ENCODE measurements at regions of chr12 and their contacts with region 1.

Region 1: GRCh38 chr12:6752921-6753771 is at the start of gene MLF2:
- DNase-seq: peak; percentile 98 to 99
- ATAC-seq: peak; percentile 93 to 94
- H3K4me3 ChIP-seq: peak within 1 kb of the TSS; percentile 98
- H3K27ac ChIP-seq: peak within 1 kb of the TSS; percentile 97 to 98
- H3K4me1 ChIP-seq: peaks cover 21% of the 10 kb centered on the region
- CTCF ChIP-seq: no peak; the same call in 2 of the 3 replicates
- EP300 ChIP-seq: no peak
- POLR2A ChIP-seq: peak; percentile 94
- RAD21 ChIP-seq: no peak; a peak in 2 of 5 replicates
- polyA plus RNA-seq, gene MLF2: 302 and 310 TPM in 2 replicates

Region 2: DNA sequence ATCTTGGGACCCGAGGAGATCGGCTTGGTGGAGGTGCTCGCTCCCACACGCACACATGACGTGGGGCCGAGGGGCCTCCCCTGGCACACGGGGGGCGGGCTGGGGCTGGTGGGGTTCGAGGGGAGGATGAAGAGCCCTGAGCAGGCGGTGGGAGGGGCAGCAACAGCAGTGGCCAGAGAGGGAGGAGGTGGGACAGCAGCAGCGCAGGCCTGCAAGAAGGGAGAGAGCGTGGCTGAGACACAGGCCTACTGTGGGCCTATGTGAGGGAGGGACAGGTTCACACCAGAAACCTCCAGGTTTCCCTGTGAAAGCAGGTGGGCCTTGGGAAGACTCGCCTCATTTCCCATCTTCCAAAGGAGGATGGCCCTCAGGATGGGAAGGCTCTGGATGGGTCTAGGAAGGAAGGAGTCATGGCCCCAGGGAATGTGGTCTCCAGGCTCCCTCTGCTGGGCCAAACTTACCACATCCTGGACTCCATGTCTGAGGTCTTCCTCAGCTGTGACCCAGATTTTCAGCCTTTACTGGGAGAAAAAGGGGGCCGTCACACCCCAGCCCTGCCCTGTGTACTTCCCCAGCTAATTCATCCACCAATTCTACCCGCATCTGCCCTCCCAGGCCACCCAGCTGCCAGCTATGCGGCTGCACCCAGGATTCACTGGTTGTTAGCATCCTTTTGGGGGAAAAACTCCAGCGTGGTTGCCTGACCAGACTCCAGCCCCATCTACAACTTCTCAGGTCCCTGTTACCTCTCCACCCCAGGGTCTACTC is 55.4 kb before region 1 on chr12:
- CTCF ChIA-PET with region 1: interaction called, 12 read pairs
- POLR2A ChIA-PET with region 1: no interaction called
- DNase-seq: peak; percentile 76 to 82
- ATAC-seq: peak; percentile 77 to 93
- H3K4me3 ChIP-seq: no peak overlapping the region
- H3K27ac ChIP-seq: no peak overlapping the region
- H3K4me1 ChIP-seq: peaks cover 7% of the 10 kb centered on the region; the same call in 1 of the 3 replicates
- CTCF ChIP-seq: peak; percentile 64
- EP300 ChIP-seq: no peak
- POLR2A ChIP-seq: no peak
- RAD21 ChIP-seq: peak; percentile 76 to 91

Region 3: DNA sequence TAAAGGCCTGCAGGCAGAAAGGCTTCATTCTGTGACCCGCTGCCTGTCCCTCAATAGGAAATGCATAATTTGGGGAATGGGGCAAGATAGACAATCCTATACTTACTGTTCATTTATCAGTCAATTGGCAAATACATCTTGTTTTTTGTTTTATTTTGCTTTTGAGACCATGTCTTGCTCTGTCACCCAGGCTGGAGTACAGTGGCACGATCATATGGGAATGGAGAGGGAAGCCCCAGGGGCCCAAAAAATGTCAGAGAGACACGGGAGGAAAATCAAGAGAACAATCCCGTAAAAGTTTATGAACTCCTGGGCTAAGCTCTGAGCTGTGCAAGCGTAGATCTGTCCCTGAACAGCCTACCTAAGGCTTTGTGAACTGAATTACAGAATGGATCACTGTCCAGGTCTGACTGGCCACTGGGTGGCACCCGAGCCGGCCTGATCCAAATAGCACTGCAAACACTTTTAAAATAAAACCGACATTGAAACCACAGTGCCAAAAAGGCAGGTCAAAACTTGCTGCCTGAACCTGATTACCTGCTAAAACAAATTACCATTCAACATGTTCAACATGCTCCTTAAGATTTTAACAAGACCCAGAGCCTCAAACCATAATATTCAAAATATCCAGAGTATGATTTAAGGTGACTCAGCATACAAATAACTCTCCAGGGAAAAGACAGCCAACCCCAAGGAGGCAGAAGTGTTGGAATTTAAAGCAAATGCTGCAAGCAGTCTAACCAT is 17.5 kb before region 1 on chr12:
- CTCF ChIA-PET with region 1: interaction called, 41 read pairs
- POLR2A ChIA-PET with region 1: interaction called, 8 read pairs
- DNase-seq: peak; percentile 68 to 77
- ATAC-seq: peak; percentile 99
- H3K4me3 ChIP-seq: no peak overlapping the region
- H3K27ac ChIP-seq: peak overlapping the region; percentile 67 to 72
- H3K4me1 ChIP-seq: peaks cover 6% of the 10 kb centered on the region
- CTCF ChIP-seq: peak; percentile 90
- EP300 ChIP-seq: no peak
- POLR2A ChIP-seq: no peak
- RAD21 ChIP-seq: peak; percentile 80 to 83

Region 4: GRCh38 chr12:6778574-6779550 is 25.7 kb after region 1 on chr12:
- CTCF ChIA-PET with region 1: interaction called, 670 read pairs
- POLR2A ChIA-PET with region 1: interaction called, 13 read pairs
- DNase-seq: peak; percentile 71 to 91
- ATAC-seq: peak; percentile 94 to 97
- H3K4me3 ChIP-seq: peak overlapping the region; percentile 30; the same call in 2 of the 3 replicates
- H3K27ac ChIP-seq: peak overlapping the region; percentile 34 to 80; a peak in 4 of 6 replicates
- H3K4me1 ChIP-seq: peaks cover 15% of the 10 kb centered on the region; the same call in 2 of the 3 replicates
- CTCF ChIP-seq: peak; percentile 94
- EP300 ChIP-seq: no peak
- POLR2A ChIP-seq: no peak
- RAD21 ChIP-seq: peak; percentile 98 to 99

Region 5: GRCh38 chr12:6825398-6826124 is 72.4 kb after region 1 on chr12:
- CTCF ChIA-PET with region 1: interaction called, 306 read pairs
- POLR2A ChIA-PET with region 1: interaction called, 20 read pairs
- DNase-seq: peak; percentile 87 to 95
- ATAC-seq: peak; percentile 40 to 78
- H3K4me3 ChIP-seq: no peak overlapping the region
- H3K27ac ChIP-seq: peak overlapping the region in 1 of 2 experiments; percentile 39; a peak in 3 of 6 replicates
- H3K4me1 ChIP-seq: peaks cover 31% of the 10 kb centered on the region
- CTCF ChIP-seq: peak; percentile 92
- EP300 ChIP-seq: no peak
- POLR2A ChIP-seq: no peak
- RAD21 ChIP-seq: peak; percentile 91 to 94